ENCODE measurements at regions of chr12 and their contacts with region 1.

Region 1: DNA sequence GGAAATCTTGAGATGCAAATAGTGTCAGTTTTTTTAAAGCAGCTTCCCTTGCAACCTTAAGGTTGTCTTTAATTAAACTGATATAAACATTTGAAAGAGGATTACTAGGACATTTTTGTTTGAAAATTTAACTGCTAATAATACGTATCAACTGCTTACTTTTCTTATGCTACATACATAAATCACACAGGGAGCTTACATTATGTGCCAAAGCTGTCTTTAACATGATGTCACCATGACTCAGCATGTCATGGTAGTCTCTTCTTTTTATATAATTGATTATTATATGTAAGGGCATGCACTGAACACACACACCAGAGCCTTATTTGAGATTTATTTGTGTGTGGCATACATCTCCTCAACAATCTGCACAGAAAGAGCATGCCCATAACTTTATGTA is 63.0 kb upstream of the PTHLH start:
- DNase-seq: peak; percentile 78
- H3K4me3 ChIP-seq: no peak overlapping the region
- H3K27ac ChIP-seq: peak overlapping the region; percentile 100
- H3K4me1 ChIP-seq: peaks cover 40% of the 10 kb centered on the region
- H3K27me3 ChIP-seq: no peaks in the 10 kb centered on the region
- CTCF ChIP-seq: no peak

Region 2: DNA sequence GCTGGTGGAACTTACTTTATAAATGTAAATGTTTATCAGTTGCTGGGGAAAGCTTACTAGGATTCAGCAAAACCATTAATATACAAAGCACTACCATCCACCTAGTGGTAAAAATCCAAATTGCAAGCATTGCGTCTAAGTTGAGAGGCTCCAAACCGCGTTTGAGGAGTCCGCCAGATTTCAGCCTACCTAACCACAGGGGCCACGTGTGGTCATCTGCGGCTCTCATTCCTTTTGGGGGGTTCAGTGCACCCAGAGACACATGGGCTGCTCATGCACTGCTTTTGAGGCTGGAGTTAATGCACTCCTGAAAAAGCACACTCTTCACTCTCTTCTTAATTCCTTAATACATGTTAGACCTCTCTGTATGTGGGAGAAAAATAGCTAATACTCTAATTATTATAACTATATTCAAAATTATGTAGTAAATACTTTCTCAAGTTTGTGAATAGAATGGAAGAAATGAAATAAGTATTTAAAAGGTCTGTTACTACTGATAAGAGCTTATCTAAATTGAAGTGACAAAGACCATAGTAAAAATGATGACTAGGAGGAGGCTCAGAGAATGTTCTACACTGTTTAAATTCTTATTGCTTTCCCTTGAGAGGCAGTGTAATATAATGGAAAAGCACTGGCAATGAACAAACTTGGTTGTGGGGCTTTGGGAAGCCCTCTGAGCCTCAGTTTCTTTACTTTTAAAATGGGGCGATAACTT is 214.1 kb before region 1 on chr12:
- CTCF ChIA-PET with region 1: no interaction called
- dilution Hi-C with region 1: no loop called
- in situ Hi-C with region 1: no loop called
- intact Hi-C with region 1: loop called (anchors 1 kb)
- DNase-seq: peak; percentile 86
- H3K4me3 ChIP-seq: peak overlapping the region in 1 of 3 experiments; percentile 14
- H3K27ac ChIP-seq: peak overlapping the region; percentile 100
- H3K4me1 ChIP-seq: peaks cover 26% of the 10 kb centered on the region
- H3K27me3 ChIP-seq: no peaks in the 10 kb centered on the region
- CTCF ChIP-seq: peak; percentile 81 to 92

Region 3: GRCh38 chr12:27999521-27999920 is 36.0 kb before region 1 on chr12:
- CTCF ChIA-PET with region 1: no interaction called
- dilution Hi-C with region 1: no loop called
- in situ Hi-C with region 1: no loop called
- intact Hi-C with region 1: loop called (anchors 1 kb)
- DNase-seq: peak; percentile 97
- H3K4me3 ChIP-seq: no peak overlapping the region
- H3K27ac ChIP-seq: peak overlapping the region; percentile 92
- H3K4me1 ChIP-seq: peaks cover 24% of the 10 kb centered on the region
- H3K27me3 ChIP-seq: no peaks in the 10 kb centered on the region
- CTCF ChIP-seq: no peak

Region 4: GRCh38 chr12:28057856-28058615 is 22.5 kb after region 1 on chr12:
- CTCF ChIA-PET with region 1: no interaction called
- dilution Hi-C with region 1: no loop called
- in situ Hi-C with region 1: no loop called
- intact Hi-C with region 1: loop called (anchors 1 kb)
- DNase-seq: peak; percentile 99
- H3K4me3 ChIP-seq: no peak overlapping the region
- H3K27ac ChIP-seq: peak overlapping the region; percentile 88
- H3K4me1 ChIP-seq: peaks cover 18% of the 10 kb centered on the region
- H3K27me3 ChIP-seq: no peaks in the 10 kb centered on the region
- CTCF ChIP-seq: no peak

Region 5: DNA sequence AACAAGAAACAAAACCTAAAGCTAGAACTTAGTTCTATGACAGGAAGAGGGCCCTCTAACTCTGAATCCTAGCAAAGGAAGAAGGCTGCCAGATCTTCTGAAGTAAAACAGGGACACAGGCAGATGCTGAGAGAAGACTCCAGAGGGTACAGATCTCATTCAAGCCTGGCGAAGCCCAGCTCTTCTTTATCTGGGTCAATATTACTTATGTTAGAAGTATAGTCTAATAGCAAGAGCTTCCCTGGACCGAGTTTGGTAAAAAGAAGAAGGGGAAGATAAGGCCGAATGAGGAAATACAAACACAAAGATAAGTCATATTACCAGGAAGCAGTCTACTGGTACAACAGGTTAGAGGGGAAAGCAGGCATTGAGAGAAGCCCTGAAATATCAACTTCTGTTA is 74.8 kb after region 1 on chr12:
- CTCF ChIA-PET with region 1: no interaction called
- dilution Hi-C with region 1: no loop called
- in situ Hi-C with region 1: no loop called
- intact Hi-C with region 1: loop called (anchors 5 kb)
- DNase-seq: no peak
- H3K4me3 ChIP-seq: no peak overlapping the region
- H3K27ac ChIP-seq: no peak overlapping the region
- H3K4me1 ChIP-seq: peaks cover 23% of the 10 kb centered on the region
- H3K27me3 ChIP-seq: no peaks in the 10 kb centered on the region
- CTCF ChIP-seq: no peak

Region 6: DNA sequence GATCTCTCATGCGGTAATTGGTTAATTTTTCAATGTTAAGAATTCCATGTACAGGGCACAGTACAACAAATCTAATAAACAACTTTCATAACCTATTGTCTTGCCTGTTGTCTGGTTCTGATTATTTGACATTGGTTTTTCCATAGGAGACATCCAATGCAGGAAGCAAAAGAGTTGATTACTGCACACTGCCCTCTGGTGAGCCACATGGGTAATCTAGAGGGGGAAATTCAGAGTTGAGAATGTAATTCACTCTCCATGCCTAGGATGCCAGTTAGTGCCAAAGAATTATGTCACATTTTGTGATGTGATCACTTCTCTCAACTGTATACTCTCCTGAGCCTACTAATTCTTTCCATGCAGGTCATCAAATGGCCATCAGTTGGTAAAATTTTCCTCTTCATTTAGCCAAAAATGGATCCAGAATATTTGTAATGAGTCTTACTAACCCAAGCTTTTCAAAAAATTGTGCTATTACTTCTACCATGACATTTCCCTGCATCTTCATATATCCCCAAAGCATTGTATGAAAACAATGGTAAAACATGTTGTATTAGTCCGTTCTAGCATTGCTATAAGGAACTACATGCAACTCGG is 137.0 kb after region 1 on chr12:
- CTCF ChIA-PET with region 1: no interaction called
- dilution Hi-C with region 1: no loop called
- in situ Hi-C with region 1: no loop called
- intact Hi-C with region 1: loop called (anchors 1 kb)
- DNase-seq: peak; percentile 63
- H3K4me3 ChIP-seq: no peak overlapping the region
- H3K27ac ChIP-seq: peak overlapping the region; percentile 23
- H3K4me1 ChIP-seq: peaks cover 12% of the 10 kb centered on the region
- H3K27me3 ChIP-seq: no peaks in the 10 kb centered on the region
- CTCF ChIP-seq: peak; percentile 80 to 85

Measured in mammary epithelial cell (primary cell).